Activated CD4-positive, alpha-beta memory T cell treated with anti-CD3 and anti-CD28 coated beads for 36 hours (primary cell): ENCODE measurements at regions of chr10 and their contacts with region 1.

Region 1: DNA sequence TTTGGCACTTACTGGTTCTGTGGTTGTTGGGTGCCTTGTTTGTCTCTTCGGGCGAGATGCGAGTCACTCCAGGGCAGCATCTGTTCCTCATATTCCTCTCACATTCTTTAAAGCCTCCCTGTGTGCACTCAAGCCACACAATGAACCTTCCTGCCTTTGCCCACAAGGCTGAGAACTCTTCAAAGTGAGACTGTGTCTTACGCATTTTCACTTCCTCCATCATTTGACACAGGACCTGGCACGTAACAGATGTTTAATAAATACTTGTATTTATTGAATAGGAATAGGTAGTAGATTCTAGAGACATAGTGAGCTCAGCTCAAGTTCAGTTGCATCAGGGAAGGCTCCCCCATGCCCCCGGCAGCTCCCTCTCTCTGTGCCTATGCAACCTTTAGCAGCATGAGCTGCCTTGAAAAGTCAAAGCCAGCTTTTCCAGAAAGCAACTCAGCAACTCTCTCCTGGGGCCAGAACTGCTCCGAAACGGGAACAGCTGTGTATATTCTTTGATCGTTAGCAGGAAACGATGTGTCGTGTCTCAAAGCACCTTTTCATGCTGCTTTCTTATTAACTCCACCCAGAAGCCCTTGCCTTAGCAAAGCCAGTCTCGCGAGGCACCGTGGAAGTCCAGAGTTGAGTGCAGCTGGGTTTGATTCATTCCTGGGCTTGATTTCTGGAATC is 97.5 kb downstream of the PFKFB3 start:
- DNase-seq: peak; percentile 68
- H3K4me3 Mint-ChIP-seq: peak overlapping the region; percentile 64
- H3K27ac Mint-ChIP-seq: peak overlapping the region; percentile 93
- H3K4me1 Mint-ChIP-seq: peaks cover 61% of the 10 kb centered on the region
- H3K27me3 Mint-ChIP-seq: no peaks in the 10 kb centered on the region

Region 2: DNA sequence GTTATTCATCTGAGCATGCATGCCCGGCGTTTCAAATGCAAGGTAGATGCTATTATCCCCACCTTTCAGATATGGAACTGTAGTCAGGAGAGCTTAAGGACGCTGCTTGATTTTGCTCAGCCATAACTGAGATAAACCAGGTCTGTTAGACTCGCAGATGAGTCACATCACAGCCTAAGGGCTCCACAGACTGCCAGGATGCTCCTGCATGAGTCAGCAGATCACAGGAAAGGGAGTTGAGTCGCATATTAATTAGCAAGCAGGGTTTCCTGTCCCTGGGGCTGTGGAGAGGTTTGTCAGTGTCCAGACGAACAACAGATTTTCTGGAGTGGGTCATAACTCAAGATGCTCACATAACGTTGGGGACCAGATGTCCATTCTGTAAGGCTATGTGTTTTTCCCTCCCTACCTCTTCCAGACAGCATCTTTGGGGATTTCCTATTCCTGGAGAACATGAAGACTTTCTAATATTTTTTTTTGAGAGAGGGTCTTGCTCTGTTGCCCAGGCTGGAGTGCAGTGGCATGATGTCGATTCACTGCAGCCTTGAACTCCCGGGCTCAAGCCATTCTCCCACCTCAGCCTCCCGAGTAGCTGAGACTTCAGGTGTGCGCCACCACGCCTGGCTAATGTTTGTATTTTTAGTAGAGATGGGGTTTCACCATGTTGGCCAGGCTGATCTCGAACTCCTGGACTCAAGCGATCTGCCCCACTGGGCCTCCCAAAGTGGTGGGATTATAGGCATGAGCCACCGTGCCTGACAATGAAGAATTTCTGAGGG is 60.8 kb before region 1 on chr10:
- CTCF ChIA-PET with region 1: no interaction called
- POLR2A ChIA-PET with region 1: no interaction called
- intact Hi-C with region 1: loop called (anchors 1 kb)
- DNase-seq: peak; percentile 86
- H3K4me3 Mint-ChIP-seq: no peak overlapping the region
- H3K27ac Mint-ChIP-seq: peak overlapping the region; percentile 76
- H3K4me1 Mint-ChIP-seq: peaks cover 25% of the 10 kb centered on the region
- H3K27me3 Mint-ChIP-seq: no peaks in the 10 kb centered on the region

Region 3: DNA sequence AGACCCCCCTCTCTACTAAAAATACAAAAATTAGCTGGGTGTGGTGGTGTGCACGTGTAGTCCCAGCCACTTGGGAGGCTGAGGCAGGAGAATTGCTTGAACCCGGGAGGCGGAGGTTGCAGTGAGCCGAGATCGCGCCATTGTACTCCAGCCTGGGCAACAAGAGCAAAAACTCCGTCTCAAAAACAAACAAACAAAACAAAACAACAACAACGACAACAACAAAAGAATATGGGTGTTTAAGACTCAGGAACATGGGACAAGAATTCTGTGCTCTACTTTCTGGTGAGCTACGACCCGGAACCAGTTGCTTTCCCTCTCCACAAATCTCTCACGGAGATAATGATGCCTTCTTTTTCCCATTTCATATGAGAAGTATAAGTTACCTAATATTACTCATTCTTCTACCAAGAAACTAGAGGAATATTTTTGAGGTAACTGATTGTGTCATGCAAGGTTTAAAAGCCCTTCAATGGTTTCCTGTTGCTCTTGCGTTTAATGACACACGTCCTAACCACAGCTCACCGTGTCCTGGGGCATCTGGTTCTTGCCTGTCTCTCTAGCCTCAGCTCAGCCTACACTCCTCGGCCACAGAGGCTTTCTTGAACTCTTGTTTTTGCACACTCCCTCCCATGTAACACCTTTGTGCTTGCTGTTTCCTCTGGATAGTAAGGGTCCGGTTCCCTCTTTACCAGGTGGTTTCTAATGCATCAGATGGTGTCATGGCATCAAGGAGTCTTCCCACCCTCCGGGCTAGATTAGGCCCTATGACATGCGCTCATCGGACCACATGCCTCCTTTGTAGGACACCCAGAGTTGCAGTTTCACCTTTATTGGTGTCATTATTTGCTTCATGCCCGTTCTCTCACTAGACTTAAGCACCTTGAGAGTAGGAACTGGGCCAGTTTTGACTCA is 30.0 kb before region 1 on chr10:
- CTCF ChIA-PET with region 1: interaction called, 7 read pairs
- POLR2A ChIA-PET with region 1: interaction called, 5 read pairs
- intact Hi-C with region 1: loop called (anchors 1 kb)
- DNase-seq: peak; percentile 91
- H3K4me3 Mint-ChIP-seq: peak overlapping the region; percentile 35
- H3K27ac Mint-ChIP-seq: peak overlapping the region; percentile 97
- H3K4me1 Mint-ChIP-seq: peaks cover 63% of the 10 kb centered on the region
- H3K27me3 Mint-ChIP-seq: no peaks in the 10 kb centered on the region

Region 4: GRCh38 chr10:6275022-6275997 is 24.9 kb before region 1 on chr10:
- CTCF ChIA-PET with region 1: interaction called, 7 read pairs
- POLR2A ChIA-PET with region 1: interaction called, 5 read pairs
- intact Hi-C with region 1: loop called (anchors 1 kb)
- DNase-seq: peak; percentile 97
- H3K4me3 Mint-ChIP-seq: peak overlapping the region; percentile 70
- H3K27ac Mint-ChIP-seq: peak overlapping the region; percentile 97
- H3K4me1 Mint-ChIP-seq: peaks cover 62% of the 10 kb centered on the region
- H3K27me3 Mint-ChIP-seq: no peaks in the 10 kb centered on the region

Region 5: DNA sequence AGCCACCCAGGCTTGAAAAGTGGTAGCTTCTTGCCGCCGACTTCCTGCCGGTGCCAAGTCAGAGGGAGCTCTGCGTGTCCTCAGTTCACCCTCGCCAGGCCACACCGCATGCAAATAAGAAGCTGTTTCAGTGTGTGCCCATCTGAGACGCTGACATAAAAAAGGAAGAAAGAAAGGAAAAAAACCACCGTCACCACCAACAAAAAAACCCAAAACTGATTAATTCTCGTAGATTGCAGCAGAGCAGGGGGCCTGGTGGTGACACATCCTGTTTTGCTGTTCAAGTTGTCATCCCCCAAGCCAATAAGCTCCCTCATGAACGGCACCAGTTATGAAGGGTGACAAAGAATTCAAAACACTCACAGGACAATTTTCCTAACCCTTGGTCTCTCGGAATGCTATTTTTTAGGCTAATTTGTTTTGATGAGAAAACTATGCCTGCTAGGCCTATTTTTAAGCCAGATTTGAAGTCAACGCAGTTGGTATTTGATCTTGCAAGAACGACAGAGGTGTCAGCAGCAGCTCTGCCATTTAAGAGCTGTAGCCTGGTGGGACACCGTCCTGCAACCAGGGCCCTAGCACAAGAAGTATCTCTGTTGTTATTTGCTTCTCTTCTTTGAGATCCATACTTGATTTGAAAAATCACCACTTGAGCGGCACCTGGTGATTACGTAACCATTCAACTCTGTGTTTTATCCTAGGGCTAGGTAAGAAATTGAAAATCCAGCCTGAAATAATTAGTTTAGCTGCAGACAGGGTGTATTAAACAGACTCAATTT is 48.0 kb after region 1 on chr10:
- CTCF ChIA-PET with region 1: interaction called, 12 read pairs
- POLR2A ChIA-PET with region 1: interaction called, 11 read pairs
- intact Hi-C with region 1: loop called (anchors 1 kb)
- DNase-seq: peak; percentile 93
- H3K4me3 Mint-ChIP-seq: peak overlapping the region; percentile 73
- H3K27ac Mint-ChIP-seq: peak overlapping the region; percentile 99
- H3K4me1 Mint-ChIP-seq: peaks cover 57% of the 10 kb centered on the region
- H3K27me3 Mint-ChIP-seq: no peaks in the 10 kb centered on the region

Region 6: GRCh38 chr10:6464862-6465430 is 164.7 kb after region 1 on chr10:
- CTCF ChIA-PET with region 1: no interaction called
- POLR2A ChIA-PET with region 1: no interaction called
- intact Hi-C with region 1: no loop called
- DNase-seq: peak; percentile 27
- H3K4me3 Mint-ChIP-seq: no peak overlapping the region
- H3K27ac Mint-ChIP-seq: no peak overlapping the region
- H3K4me1 Mint-ChIP-seq: peaks cover 24% of the 10 kb centered on the region
- H3K27me3 Mint-ChIP-seq: no peaks in the 10 kb centered on the region